Right ventricle myocardium inferior (tissue), 1 donor: ENCODE measurements at regions of chr7 and their contacts with region 1.

Region 1: GRCh38 chr7:25669961-25670841 is 441.9 kb upstream of the NPVF start:
- DNase-seq: no peak
- ATAC-seq: peak; percentile 88

Region 2: DNA sequence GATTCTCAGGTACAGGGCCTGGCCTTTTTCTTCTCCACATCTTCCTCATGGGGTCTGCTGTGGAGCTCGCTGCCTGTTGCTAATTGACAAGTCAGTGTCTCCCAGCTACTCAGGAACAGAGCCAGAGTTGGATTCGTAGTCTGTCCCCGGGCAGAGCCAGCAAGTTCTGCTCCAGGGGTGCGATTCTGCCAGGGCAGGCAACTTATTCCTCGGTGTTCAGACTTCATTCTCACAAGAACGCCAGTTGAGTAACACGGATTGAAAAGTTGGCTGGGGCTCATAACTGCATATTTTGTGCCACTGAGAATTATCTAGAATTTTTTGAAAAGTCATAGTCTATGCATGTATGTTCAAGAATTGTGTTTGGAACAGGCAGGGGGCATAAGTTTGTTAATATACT is 105.2 kb before region 1 on chr7:
- intact Hi-C with region 1: no loop called
- DNase-seq: no peak
- ATAC-seq: no peak

Region 3: GRCh38 chr7:25831831-25832411 is 161.7 kb after region 1 on chr7:
- intact Hi-C with region 1: loop called (anchors 5 kb)
- DNase-seq: no peak
- ATAC-seq: no peak